Endothelial cell of umbilical vein (primary cell): ENCODE measurements at regions of chr9 and their contacts with region 1.

Region 1: DNA sequence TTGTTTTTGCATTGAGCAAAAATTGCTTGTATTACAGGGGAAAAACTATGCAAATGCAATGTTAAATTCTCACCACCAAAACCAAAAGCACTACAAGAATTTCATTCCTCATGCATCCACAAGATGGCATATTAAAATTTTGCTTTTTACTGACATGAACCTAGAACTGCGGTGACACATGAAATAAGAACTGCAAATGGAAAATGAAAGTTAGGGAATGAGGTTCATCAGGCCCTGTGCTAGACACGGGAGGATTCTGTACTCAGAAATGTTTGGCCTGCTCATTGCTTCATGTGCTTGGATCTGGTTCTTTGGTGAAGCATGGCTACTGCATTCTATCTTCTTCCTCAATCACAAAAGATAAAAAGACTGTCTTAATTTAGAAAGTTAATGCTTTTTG is 9.1 kb upstream of the RFK start:
- DNase-seq: peak; percentile 83
- H3K4me3 ChIP-seq: no peak overlapping the region
- H3K27ac ChIP-seq: peak overlapping the region; percentile 32
- H3K4me1 ChIP-seq: peaks cover 5% of the 10 kb centered on the region
- H3K27me3 ChIP-seq: no peaks in the 10 kb centered on the region
- CTCF ChIP-seq: peak; percentile 34 to 42
- POLR2A ChIP-seq: no peak

Region 2: DNA sequence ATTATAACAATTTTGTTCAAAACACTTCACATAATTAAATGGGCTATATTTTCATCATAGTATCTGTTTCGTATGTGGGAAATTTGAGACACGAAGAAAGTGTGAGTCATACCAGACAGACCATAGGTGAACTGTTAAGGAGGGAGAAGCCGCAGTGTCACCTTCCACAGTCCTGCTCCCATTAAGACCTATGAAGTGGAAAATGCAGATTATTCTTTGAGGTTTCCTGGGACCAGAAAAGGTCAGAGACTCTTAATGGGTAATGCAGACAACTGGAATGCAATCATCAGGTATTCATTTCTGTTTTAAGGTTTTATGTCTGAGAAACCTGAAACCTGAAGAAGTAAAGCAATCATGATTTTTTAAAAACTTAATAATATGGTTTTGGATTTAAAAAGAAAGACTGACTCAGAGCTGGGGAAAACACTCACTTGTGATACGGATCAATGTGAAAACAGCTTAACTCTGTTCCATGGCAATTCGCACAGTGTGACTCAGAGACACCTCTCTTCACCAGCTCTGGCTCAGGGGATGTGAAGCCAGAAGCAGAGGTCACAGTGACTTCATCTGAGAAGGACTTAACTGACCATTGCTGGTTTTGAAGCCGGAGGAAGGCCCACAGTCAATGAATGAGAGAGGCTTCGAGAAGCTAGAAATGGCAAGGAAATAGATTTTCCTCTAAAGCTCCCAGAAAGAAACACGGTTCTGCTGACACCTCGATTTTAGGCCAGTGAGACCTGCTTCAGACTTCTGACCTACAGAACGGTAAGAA is 38.4 kb after region 1 on chr9:
- CTCF ChIA-PET with region 1: interaction called, 4 read pairs
- POLR2A ChIA-PET with region 1: no interaction called
- dilution Hi-C with region 1: no loop called
- intact Hi-C with region 1: loop called (anchors 2 kb)
- DNase-seq: peak; percentile 77
- H3K4me3 ChIP-seq: no peak overlapping the region
- H3K27ac ChIP-seq: peak overlapping the region; percentile 53
- H3K4me1 ChIP-seq: peaks cover 8% of the 10 kb centered on the region
- H3K27me3 ChIP-seq: no peaks in the 10 kb centered on the region
- CTCF ChIP-seq: no peak
- POLR2A ChIP-seq: no peak

Region 3: GRCh38 chr9:76537150-76537646 is 133.8 kb after region 1 on chr9:
- CTCF ChIA-PET with region 1: no interaction called
- POLR2A ChIA-PET with region 1: no interaction called
- dilution Hi-C with region 1: no loop called
- intact Hi-C with region 1: no loop called
- DNase-seq: peak; percentile 77
- H3K4me3 ChIP-seq: no peak overlapping the region
- H3K27ac ChIP-seq: no peak overlapping the region
- H3K4me1 ChIP-seq: no peaks in the 10 kb centered on the region
- H3K27me3 ChIP-seq: no peaks in the 10 kb centered on the region
- CTCF ChIP-seq: no peak
- POLR2A ChIP-seq: no peak